Naive thymus-derived CD4-positive, alpha-beta T cell (primary cell): ENCODE measurements at regions of chr17 and their contacts with region 1.

Region 1: DNA sequence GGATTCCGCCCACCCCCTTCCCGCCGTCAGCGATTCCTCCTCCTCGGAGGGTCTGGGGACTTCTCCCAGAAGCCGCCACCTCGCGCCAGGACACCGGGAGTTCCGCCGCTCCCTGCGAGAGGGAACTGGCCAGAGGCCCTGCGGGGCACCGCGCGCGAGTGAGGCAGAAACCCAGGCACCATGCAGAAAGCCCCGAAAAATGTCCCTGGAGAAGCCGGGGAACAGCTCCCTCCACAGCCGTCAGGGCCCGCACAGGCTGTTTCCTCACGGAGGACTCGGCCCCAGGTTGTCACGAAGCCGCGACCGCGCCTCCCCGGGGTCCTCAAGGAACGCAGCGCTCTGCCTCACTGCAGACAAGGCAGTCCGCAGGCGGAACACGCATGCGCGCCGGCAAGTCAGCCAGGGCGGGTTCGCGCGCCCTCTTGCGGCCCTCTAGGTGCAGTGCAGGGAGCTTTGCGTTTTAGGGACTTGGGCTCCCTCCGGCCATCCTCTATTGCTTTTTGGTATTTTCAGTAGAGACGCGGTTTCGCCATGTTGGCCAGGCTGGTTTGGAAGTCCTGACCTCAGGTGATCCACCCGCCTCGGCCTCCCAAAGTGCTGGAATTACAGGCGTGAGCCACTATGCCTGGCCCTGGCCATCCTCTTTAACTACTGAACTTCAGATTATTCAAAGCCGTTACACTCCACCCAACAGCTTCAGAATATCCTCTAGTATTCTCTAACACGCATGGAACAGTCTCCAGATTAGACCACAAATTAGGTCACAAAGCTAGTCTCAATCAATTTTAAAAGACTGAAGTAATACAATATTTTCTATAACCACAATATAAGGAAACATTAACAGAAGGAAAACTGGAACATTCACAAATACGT is 20.3 kb upstream of the ZNF287 start:
- DNase-seq: peak; percentile 86 to 96 (median 92)
- ATAC-seq: peak; percentile 99
- H3K4me3 ChIP-seq: peak overlapping the region; percentile 61
- H3K4me3 Mint-ChIP-seq: peak overlapping the region; percentile 70 to 85 (median 77)
- H3K27ac ChIP-seq: peak overlapping the region; percentile 47
- H3K27ac Mint-ChIP-seq: peak overlapping the region in 5 of 9 donors; percentile 7 to 80 (median 73)
- H3K4me1 ChIP-seq: peaks cover 0 to 3% of the 10 kb centered on the region in 2 donors
- H3K4me1 Mint-ChIP-seq: peaks cover 0 to 13% (median 4%) of the 10 kb centered on the region in 7 donors
- H3K27me3 ChIP-seq: no peaks in the 10 kb centered on the region
- H3K27me3 Mint-ChIP-seq: peaks cover 23 to 61% (median 25%) of the 10 kb centered on the region in 5 donors

Region 2: DNA sequence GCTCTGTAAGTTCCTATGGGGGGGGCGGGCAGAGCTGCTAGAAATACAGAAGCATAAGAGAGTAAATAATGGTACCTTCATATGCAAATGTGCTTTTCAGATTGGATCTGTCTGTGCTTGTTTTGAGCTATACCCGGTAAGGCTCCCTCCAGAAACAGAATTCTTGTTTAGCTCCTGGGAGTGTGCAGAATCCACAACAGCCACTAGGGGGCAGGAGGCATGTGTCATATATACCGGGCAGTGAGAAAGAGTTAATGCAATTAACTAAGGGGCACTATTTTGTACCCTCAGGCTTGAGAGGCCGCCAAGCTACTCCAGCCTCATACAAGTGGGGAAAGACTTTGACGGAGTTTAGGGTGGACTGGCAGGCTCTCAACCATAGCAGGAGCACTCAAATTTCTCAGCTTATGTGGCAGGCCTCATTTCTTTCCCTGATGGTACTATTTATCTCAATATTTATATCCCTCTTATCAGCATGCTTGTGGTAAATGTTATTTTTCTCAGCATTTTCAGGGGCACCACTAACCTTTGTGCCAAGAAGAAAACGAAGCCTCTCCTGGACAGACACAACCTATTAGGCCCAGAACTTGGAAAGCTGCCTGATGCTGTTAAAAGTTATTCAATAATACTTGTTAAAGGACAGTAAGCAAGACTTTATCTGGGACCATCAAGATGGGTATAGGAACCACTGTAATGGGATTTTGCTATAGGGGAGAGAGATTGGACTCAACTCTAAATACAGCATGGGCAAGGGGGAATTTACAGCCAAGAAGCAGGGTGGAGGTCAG is 225.4 kb before region 1 on chr17:
- CTCF ChIA-PET with region 1: interaction called, 4 read pairs
- POLR2A ChIA-PET with region 1: no interaction called
- intact Hi-C with region 1: loop called in 1 of 2 experiments (anchors 5 kb)
- DNase-seq: peak; percentile 42 to 73 (median 57)
- ATAC-seq: peak; percentile 96
- H3K4me3 ChIP-seq: no peak overlapping the region
- H3K4me3 Mint-ChIP-seq: no peak overlapping the region
- H3K27ac ChIP-seq: no peak overlapping the region
- H3K27ac Mint-ChIP-seq: no peak overlapping the region
- H3K4me1 ChIP-seq: no peaks in the 10 kb centered on the region
- H3K4me1 Mint-ChIP-seq: peaks cover 0 to 5% (median 0%) of the 10 kb centered on the region in 7 donors
- H3K27me3 ChIP-seq: no peaks in the 10 kb centered on the region
- H3K27me3 Mint-ChIP-seq: no peaks in the 10 kb centered on the region

Region 3: GRCh38 chr17:16456742-16457316 is 132.5 kb before region 1 on chr17:
- CTCF ChIA-PET with region 1: interaction called, 3 read pairs
- POLR2A ChIA-PET with region 1: no interaction called
- intact Hi-C with region 1: loop called (anchors 1 kb)
- DNase-seq: no peak
- ATAC-seq: no peak
- H3K4me3 ChIP-seq: no peak overlapping the region
- H3K4me3 Mint-ChIP-seq: no peak overlapping the region
- H3K27ac ChIP-seq: no peak overlapping the region
- H3K27ac Mint-ChIP-seq: peak overlapping the region in 2 of 9 donors; percentile 23 to 45
- H3K4me1 ChIP-seq: no peaks in the 10 kb centered on the region
- H3K4me1 Mint-ChIP-seq: peaks cover 0 to 14% (median 7%) of the 10 kb centered on the region in 7 donors
- H3K27me3 ChIP-seq: no peaks in the 10 kb centered on the region
- H3K27me3 Mint-ChIP-seq: no peaks in the 10 kb centered on the region

Region 4: GRCh38 chr17:16568541-16569357 is 20.6 kb before region 1 on chr17 and contains the start of gene ZNF287:
- CTCF ChIA-PET with region 1: interaction called, 5 read pairs
- POLR2A ChIA-PET with region 1: interaction called, 3 read pairs
- intact Hi-C with region 1: loop called (anchors 1 kb)
- DNase-seq: peak; percentile 81 to 96 (median 92)
- ATAC-seq: peak; percentile 98
- H3K4me3 ChIP-seq: peak within 1 kb of the TSS; percentile 73
- H3K4me3 Mint-ChIP-seq: peak within 1 kb of the TSS; percentile 81 to 87 (median 86)
- H3K27ac ChIP-seq: peak within 1 kb of the TSS; percentile 82
- H3K27ac Mint-ChIP-seq: peak within 1 kb of the TSS; percentile 59 to 97 (median 91)
- H3K4me1 ChIP-seq: peaks cover 6 to 14% of the 10 kb centered on the region in 2 donors
- H3K4me1 Mint-ChIP-seq: peaks cover 8 to 29% (median 19%) of the 10 kb centered on the region in 7 donors
- H3K27me3 ChIP-seq: no peaks in the 10 kb centered on the region
- H3K27me3 Mint-ChIP-seq: peaks cover 0 to 10% (median 0%) of the 10 kb centered on the region in 5 donors
- total RNA-seq, gene ZNF287: 9.6 to 18.1 (median 13.4) TPM

Region 5: GRCh38 chr17:16653209-16654041 is 64.1 kb after region 1 on chr17 and contains the start of gene ZNF624:
- CTCF ChIA-PET with region 1: no interaction called
- POLR2A ChIA-PET with region 1: no interaction called
- intact Hi-C with region 1: loop called (anchors 1 kb)
- DNase-seq: peak; percentile 75 to 87 (median 84)
- ATAC-seq: peak; percentile 98
- H3K4me3 ChIP-seq: peak within 1 kb of the TSS; percentile 76
- H3K4me3 Mint-ChIP-seq: peak within 1 kb of the TSS; percentile 81 to 93 (median 89)
- H3K27ac ChIP-seq: peak within 1 kb of the TSS; percentile 78
- H3K27ac Mint-ChIP-seq: peak within 1 kb of the TSS; percentile 7 to 91 (median 78)
- H3K4me1 ChIP-seq: peaks cover 0 to 11% of the 10 kb centered on the region in 2 donors
- H3K4me1 Mint-ChIP-seq: peaks cover 6 to 25% (median 21%) of the 10 kb centered on the region in 7 donors
- H3K27me3 ChIP-seq: no peaks in the 10 kb centered on the region
- H3K27me3 Mint-ChIP-seq: peaks cover 0 to 13% (median 0%) of the 10 kb centered on the region in 5 donors
- total RNA-seq, gene ZNF624: 3.8 to 11.4 (median 6.7) TPM

Region 6: DNA sequence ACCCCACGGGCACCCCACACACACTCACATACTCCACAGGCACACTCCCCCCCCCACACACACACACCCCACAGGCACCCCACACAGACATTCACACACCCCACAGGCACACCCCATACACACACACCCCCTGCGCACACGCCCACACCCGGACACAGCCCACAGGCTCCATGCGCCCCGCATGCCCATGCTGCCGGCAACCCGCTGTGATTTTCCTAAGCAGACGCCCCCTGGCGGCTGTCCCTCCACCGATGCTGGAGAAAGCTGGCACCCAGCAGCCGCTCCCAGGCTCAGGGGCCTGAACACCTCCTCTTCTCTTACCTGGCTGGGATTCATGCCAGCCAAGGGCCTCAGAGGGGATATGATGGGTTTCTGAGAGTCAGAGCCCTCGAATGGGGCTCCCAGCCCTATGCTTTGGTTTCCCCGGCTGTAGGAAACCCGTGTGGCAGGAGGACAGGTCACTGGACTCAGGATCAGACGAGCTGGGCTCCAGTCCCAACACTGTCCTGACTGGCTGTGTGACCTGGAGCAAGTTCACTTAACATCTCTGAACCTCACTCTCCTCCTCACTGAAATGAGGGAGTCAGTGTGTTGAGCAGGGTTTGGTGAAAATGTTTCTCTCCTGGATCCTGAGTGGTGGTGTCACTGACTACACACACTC is 402.1 kb after region 1 on chr17:
- CTCF ChIA-PET with region 1: interaction called, 3 read pairs
- POLR2A ChIA-PET with region 1: no interaction called
- intact Hi-C with region 1: loop called in 1 of 2 experiments (anchors 1 kb)
- DNase-seq: peak; percentile 53 to 80 (median 72)
- ATAC-seq: peak; percentile 67
- H3K4me3 ChIP-seq: no peak overlapping the region
- H3K4me3 Mint-ChIP-seq: peak overlapping the region in 4 of 10 donors; percentile 25 to 69 (median 33)
- H3K27ac ChIP-seq: no peak overlapping the region
- H3K27ac Mint-ChIP-seq: peak overlapping the region in 4 of 9 donors; percentile 17 to 69 (median 46)
- H3K4me1 ChIP-seq: peaks cover 34 to 36% of the 10 kb centered on the region in 2 donors
- H3K4me1 Mint-ChIP-seq: peaks cover 24 to 41% (median 31%) of the 10 kb centered on the region in 7 donors
- H3K27me3 ChIP-seq: no peaks in the 10 kb centered on the region
- H3K27me3 Mint-ChIP-seq: peaks cover 0 to 10% (median 0%) of the 10 kb centered on the region in 5 donors

Region 7: GRCh38 chr17:17303010-17303846 is 713.9 kb after region 1 on chr17 and contains the start of gene NT5M:
- CTCF ChIA-PET with region 1: no interaction called
- POLR2A ChIA-PET with region 1: no interaction called
- intact Hi-C with region 1: loop called in 1 of 2 experiments (anchors 10 kb)
- DNase-seq: peak; percentile 33 to 84 (median 56)
- ATAC-seq: peak; percentile 77
- H3K4me3 ChIP-seq: peak within 1 kb of the TSS; percentile 58
- H3K4me3 Mint-ChIP-seq: peak within 1 kb of the TSS; percentile 82 to 96 (median 90)
- H3K27ac ChIP-seq: peak within 1 kb of the TSS; percentile 67
- H3K27ac Mint-ChIP-seq: peak within 1 kb of the TSS; percentile 53 to 93 (median 84)
- H3K4me1 ChIP-seq: peaks cover 12 to 33% of the 10 kb centered on the region in 2 donors
- H3K4me1 Mint-ChIP-seq: peaks cover 16 to 49% (median 37%) of the 10 kb centered on the region in 7 donors
- H3K27me3 ChIP-seq: no peaks in the 10 kb centered on the region
- H3K27me3 Mint-ChIP-seq: no peaks in the 10 kb centered on the region
- total RNA-seq, gene NT5M: 2.9 to 6.3 (median 3.5) TPM